B cell (primary cell): ENCODE measurements at regions of chrX and their contacts with region 1.

Region 1: GRCh38 chrX:40647307-40648197 is at the start of gene CXorf38:
- DNase-seq: peak; percentile 94
- ATAC-seq: peak; percentile 68
- H3K4me3 ChIP-seq: peak within 1 kb of the TSS; percentile 56 to 87 (median 76)
- H3K4me3 Mint-ChIP-seq: peak within 1 kb of the TSS; percentile 94
- H3K27ac ChIP-seq: peak within 1 kb of the TSS; percentile 72 to 94
- H3K27ac Mint-ChIP-seq: peak within 1 kb of the TSS; percentile 92
- H3K4me1 ChIP-seq: peaks cover 38 to 40% of the 10 kb centered on the region in 2 donors
- H3K4me1 Mint-ChIP-seq: peaks cover 35% of the 10 kb centered on the region
- H3K27me3 ChIP-seq: no peaks in the 10 kb centered on the region
- H3K27me3 Mint-ChIP-seq: no peaks in the 10 kb centered on the region
- CTCF ChIP-seq: no peak
- total RNA-seq, gene CXorf38: 26.4 and 27.4 TPM in 2 replicates

Region 2: DNA sequence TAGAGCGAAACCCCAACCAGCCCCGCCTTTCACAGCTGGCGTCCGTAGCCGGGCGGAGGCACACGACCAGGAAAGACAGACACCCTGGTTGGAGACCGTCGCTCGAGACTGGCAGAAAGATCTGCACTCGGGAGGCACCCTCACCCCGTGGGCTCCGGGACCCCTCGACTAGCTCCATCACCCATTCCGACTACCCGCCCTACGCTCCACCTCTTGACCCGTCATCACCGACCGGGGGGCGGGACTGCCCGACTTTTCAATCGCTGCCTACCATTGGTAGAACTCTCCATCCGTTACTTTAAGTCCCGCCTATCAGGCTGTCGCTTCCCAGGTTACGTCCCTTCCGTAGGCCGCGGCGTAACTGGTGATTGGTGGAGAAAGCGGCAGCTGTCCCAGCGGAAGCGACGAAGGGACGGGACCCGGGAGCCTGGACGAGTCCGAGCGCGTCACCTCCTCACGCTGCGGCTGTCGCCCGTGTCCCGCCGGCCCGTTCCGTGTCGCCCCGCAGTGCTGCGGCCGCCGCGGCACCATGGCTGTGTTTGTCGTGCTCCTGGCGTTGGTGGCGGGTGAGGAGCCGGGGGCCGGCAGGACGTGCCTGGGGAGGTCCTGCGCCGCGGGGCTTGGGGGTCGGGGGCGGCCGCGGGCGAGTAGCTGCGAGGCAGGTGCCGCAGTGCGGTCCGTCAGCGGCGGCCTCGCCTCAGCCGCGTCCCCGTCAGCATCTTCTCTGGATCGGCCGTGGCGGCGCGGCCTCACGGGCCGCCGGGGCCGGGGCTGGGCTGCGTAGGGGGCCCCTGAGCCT is 66.8 kb before region 1 on chrX and contains the start of gene ATP6AP2:
- CTCF ChIA-PET with region 1: interaction called, 6 read pairs
- POLR2A ChIA-PET with region 1: no interaction called
- intact Hi-C with region 1: loop called (anchors 1 kb)
- DNase-seq: peak; percentile 93
- ATAC-seq: peak; percentile 95
- H3K4me3 ChIP-seq: peak within 1 kb of the TSS; percentile 24 to 74 (median 68)
- H3K4me3 Mint-ChIP-seq: peak within 1 kb of the TSS; percentile 93
- H3K27ac ChIP-seq: peak within 1 kb of the TSS; percentile 86 to 94
- H3K27ac Mint-ChIP-seq: peak within 1 kb of the TSS; percentile 96
- H3K4me1 ChIP-seq: peaks cover 8 to 14% of the 10 kb centered on the region in 2 donors
- H3K4me1 Mint-ChIP-seq: peaks cover 25% of the 10 kb centered on the region
- H3K27me3 ChIP-seq: no peaks in the 10 kb centered on the region
- H3K27me3 Mint-ChIP-seq: no peaks in the 10 kb centered on the region
- CTCF ChIP-seq: no peak
- total RNA-seq, gene ATP6AP2: 53.3 and 57.8 TPM in 2 replicates

Region 3: DNA sequence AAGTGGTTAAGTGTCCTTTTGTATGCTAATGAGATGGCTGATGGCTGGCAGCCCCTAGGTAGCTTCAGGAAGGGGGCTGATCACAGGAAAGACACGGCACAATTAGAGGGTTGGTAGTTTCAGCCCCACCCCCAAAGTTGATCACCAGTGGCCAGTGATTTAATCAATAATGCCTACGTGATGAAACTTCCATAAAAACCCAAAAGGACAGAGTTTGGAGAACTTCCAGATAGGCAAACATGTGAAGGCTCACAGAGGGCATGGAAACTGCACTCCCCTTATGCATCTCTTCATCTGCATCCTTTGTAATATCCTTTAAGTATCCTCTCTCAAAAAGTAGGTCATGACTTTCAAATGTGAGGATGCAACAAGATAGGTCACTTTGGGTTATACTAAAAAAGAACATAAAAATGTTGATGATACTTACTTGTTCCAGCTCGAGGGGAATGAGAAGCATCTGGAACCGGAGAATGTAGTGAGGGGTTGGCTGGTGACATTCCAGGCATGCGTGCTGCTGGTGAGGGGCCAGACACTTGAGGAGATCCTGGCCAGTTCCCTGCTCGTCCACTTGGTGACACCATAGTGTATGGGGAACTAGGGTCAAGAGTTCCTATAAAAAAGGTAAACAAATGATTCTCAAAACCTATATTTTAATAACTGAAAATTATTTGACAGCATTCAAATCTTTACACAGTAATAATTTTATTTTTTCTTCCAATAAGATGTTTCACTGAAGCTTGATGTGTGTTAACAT is 16.5 kb after region 1 on chrX:
- CTCF ChIA-PET with region 1: interaction called, 15 read pairs
- POLR2A ChIA-PET with region 1: no interaction called
- intact Hi-C with region 1: no loop called
- DNase-seq: no peak
- ATAC-seq: no peak
- H3K4me3 ChIP-seq: no peak overlapping the region
- H3K4me3 Mint-ChIP-seq: no peak overlapping the region
- H3K27ac ChIP-seq: no peak overlapping the region
- H3K27ac Mint-ChIP-seq: peak overlapping the region; percentile 50
- H3K4me1 ChIP-seq: no peaks in the 10 kb centered on the region
- H3K4me1 Mint-ChIP-seq: peaks cover 5% of the 10 kb centered on the region
- H3K27me3 ChIP-seq: no peaks in the 10 kb centered on the region
- H3K27me3 Mint-ChIP-seq: no peaks in the 10 kb centered on the region
- CTCF ChIP-seq: no peak

Region 4: GRCh38 chrX:40735325-40736169 is 88.0 kb after region 1 on chrX and contains the start of gene MED14:
- CTCF ChIA-PET with region 1: interaction called, 8 read pairs
- POLR2A ChIA-PET with region 1: no interaction called
- intact Hi-C with region 1: loop called (anchors 1 kb)
- DNase-seq: peak; percentile 94
- ATAC-seq: peak; percentile 84
- H3K4me3 ChIP-seq: peak within 1 kb of the TSS; percentile 64 to 93 (median 82)
- H3K4me3 Mint-ChIP-seq: peak within 1 kb of the TSS; percentile 91
- H3K27ac ChIP-seq: peak within 1 kb of the TSS; percentile 91 to 98
- H3K27ac Mint-ChIP-seq: peak within 1 kb of the TSS; percentile 98
- H3K4me1 ChIP-seq: peaks cover 25 to 31% of the 10 kb centered on the region in 2 donors
- H3K4me1 Mint-ChIP-seq: peaks cover 34% of the 10 kb centered on the region
- H3K27me3 ChIP-seq: peaks cover 0 to 2% (median 0%) of the 10 kb centered on the region in 4 experiments
- H3K27me3 Mint-ChIP-seq: no peaks in the 10 kb centered on the region
- CTCF ChIP-seq: peak; percentile 56
- total RNA-seq, gene MED14: 63.5 and 67.1 TPM in 2 replicates

Region 5: GRCh38 chrX:40792433-40792832 is 144.9 kb after region 1 on chrX:
- CTCF ChIA-PET with region 1: interaction called, 64 read pairs
- POLR2A ChIA-PET with region 1: no interaction called
- intact Hi-C with region 1: no loop called
- DNase-seq: no peak
- ATAC-seq: no peak
- H3K4me3 ChIP-seq: no peak overlapping the region
- H3K4me3 Mint-ChIP-seq: no peak overlapping the region
- H3K27ac ChIP-seq: no peak overlapping the region
- H3K27ac Mint-ChIP-seq: no peak overlapping the region
- H3K4me1 ChIP-seq: peaks cover 0 to 4% of the 10 kb centered on the region in 2 donors
- H3K4me1 Mint-ChIP-seq: peaks cover 2% of the 10 kb centered on the region
- H3K27me3 ChIP-seq: no peaks in the 10 kb centered on the region
- H3K27me3 Mint-ChIP-seq: no peaks in the 10 kb centered on the region
- CTCF ChIP-seq: no peak

Region 6: DNA sequence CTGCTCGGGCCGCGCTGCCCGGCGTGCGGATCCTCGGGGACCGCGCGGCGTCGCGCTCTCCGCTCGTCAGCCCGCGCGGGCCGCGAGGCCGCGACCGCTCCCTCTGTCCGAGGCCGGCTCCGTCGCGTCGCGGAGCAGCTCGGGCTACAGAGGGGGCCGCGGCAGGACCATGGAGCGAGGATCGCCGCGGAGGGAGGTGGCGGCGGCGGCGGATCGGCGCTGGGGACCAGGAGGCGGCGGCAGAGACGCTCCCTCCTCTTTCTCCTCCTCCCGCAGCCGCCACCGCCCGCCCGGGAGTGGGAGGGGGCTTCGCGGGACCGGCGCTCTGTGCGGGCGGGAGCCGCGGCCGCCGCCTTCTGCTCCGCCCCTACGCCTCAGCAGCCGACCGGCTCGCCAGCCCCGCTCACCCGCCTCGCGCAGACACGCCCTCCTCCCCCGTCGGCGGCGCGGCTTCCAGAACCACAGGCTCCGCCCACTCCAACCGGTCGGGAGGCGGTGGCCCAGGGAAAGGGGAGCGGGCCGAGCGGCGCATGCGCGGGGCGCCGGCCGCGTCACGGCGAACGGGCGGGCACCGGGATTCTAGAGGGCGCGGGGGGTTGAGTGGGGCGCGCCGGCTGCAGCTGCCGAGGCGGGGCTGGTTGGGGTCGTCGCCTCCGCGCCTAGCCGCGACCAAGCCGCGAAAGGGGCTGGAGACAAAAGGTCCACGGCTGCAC is 1275.9 kb after region 1 on chrX and contains the start of gene CASK:
- CTCF ChIA-PET with region 1: no interaction called
- POLR2A ChIA-PET with region 1: no interaction called
- intact Hi-C with region 1: loop called (anchors 10 kb)
- DNase-seq: peak; percentile 89
- ATAC-seq: peak; percentile 88
- H3K4me3 ChIP-seq: peak within 1 kb of the TSS; percentile 51 to 79 (median 64)
- H3K4me3 Mint-ChIP-seq: peak within 1 kb of the TSS; percentile 95
- H3K27ac ChIP-seq: peak within 1 kb of the TSS; percentile 12 to 38
- H3K27ac Mint-ChIP-seq: peak within 1 kb of the TSS; percentile 86
- H3K4me1 ChIP-seq: peaks cover 3 to 11% of the 10 kb centered on the region in 2 donors
- H3K4me1 Mint-ChIP-seq: peaks cover 26% of the 10 kb centered on the region
- H3K27me3 ChIP-seq: no peaks in the 10 kb centered on the region
- H3K27me3 Mint-ChIP-seq: no peaks in the 10 kb centered on the region
- CTCF ChIP-seq: no peak
- total RNA-seq, gene CASK: 50.4 and 60.4 TPM in 2 replicates